B cell (primary cell): ENCODE measurements at regions of chr5 and their contacts with region 1.

Region 1: DNA sequence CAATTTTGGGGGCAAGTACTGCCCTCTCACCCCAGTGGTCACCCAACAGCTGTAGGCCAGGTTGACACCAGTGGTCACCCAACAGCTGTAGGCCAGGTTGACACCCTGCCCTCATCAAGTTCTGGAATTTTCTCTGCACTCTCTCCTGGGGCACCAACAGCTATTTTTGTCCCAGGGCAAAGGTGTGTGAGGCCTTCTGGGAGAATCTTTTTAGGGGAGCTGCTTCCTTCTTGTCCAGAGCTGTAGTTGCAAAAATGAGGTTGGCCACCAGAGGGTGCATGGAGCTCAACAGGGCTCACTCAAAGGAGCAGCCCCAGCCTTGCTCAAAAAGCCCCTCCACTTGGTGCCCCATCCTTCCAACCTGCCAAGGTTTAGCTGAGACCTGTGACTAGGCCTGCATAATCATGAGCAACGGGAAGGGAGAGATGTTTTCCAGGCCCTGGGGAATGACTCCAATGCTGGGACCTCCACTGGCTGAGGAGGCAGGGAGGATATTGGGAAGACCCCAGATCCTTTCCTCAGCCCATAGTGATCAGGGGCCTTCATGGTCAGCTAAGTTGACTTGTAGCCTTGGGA is 10.6 kb upstream of the P4HA2 start:
- DNase-seq: peak; percentile 78
- ATAC-seq: peak; percentile 80
- H3K4me3 ChIP-seq: no peak overlapping the region
- H3K4me3 Mint-ChIP-seq: no peak overlapping the region
- H3K27ac ChIP-seq: no peak overlapping the region
- H3K27ac Mint-ChIP-seq: no peak overlapping the region
- H3K4me1 ChIP-seq: no peaks in the 10 kb centered on the region
- H3K4me1 Mint-ChIP-seq: no peaks in the 10 kb centered on the region
- H3K27me3 ChIP-seq: no peaks in the 10 kb centered on the region
- H3K27me3 Mint-ChIP-seq: peaks cover 4% of the 10 kb centered on the region
- CTCF ChIP-seq: peak; percentile 89

Region 2: GRCh38 chr5:132227485-132228240 is 10.6 kb before region 1 on chr5 and contains the start of gene P4HA2:
- CTCF ChIA-PET with region 1: interaction called, 19 read pairs
- POLR2A ChIA-PET with region 1: no interaction called
- intact Hi-C with region 1: no loop called
- DNase-seq: peak; percentile 57
- ATAC-seq: peak; percentile 85
- H3K4me3 ChIP-seq: peak within 1 kb of the TSS in 4 of 5 experiments; percentile 35 to 66 (median 61)
- H3K4me3 Mint-ChIP-seq: peak within 1 kb of the TSS; percentile 77
- H3K27ac ChIP-seq: no peak within 1 kb of the TSS
- H3K27ac Mint-ChIP-seq: no peak within 1 kb of the TSS
- H3K4me1 ChIP-seq: peaks cover 33 to 42% of the 10 kb centered on the region in 2 donors
- H3K4me1 Mint-ChIP-seq: peaks cover 39% of the 10 kb centered on the region
- H3K27me3 ChIP-seq: peaks cover 0 to 21% (median 9%) of the 10 kb centered on the region in 4 experiments
- H3K27me3 Mint-ChIP-seq: peaks cover 19% of the 10 kb centered on the region
- CTCF ChIP-seq: no peak
- total RNA-seq, gene P4HA2: 0.22 and 0.25 TPM in 2 replicates

Region 3: GRCh38 chr5:132251220-132251725 is 13.0 kb after region 1 on chr5:
- CTCF ChIA-PET with region 1: interaction called, 15 read pairs
- POLR2A ChIA-PET with region 1: no interaction called
- intact Hi-C with region 1: no loop called
- DNase-seq: no peak
- ATAC-seq: no peak
- H3K4me3 ChIP-seq: no peak overlapping the region
- H3K4me3 Mint-ChIP-seq: no peak overlapping the region
- H3K27ac ChIP-seq: no peak overlapping the region
- H3K27ac Mint-ChIP-seq: no peak overlapping the region
- H3K4me1 ChIP-seq: no peaks in the 10 kb centered on the region
- H3K4me1 Mint-ChIP-seq: no peaks in the 10 kb centered on the region
- H3K27me3 ChIP-seq: peaks cover 0 to 8% (median under 1%) of the 10 kb centered on the region in 4 experiments
- H3K27me3 Mint-ChIP-seq: peaks cover 13% of the 10 kb centered on the region
- CTCF ChIP-seq: no peak